ENCODE measurements at regions of chr6 and their contacts with region 1.

Region 1: GRCh38 chr6:33248925-33249731 is 22.5 kb downstream of the VPS52 start:
- DNase-seq: peak; percentile 86 to 99 (median 98)
- H3K4me3 ChIP-seq: peak overlapping the region; percentile 46 to 100 (median 72)
- H3K27ac ChIP-seq: peak overlapping the region; percentile 67 to 96 (median 90)
- H3K27me3 ChIP-seq: no peaks in the 10 kb centered on the region
- CTCF ChIP-seq: peak in 53 of 56 donors; percentile 34 to 76 (median 53)

Region 2: DNA sequence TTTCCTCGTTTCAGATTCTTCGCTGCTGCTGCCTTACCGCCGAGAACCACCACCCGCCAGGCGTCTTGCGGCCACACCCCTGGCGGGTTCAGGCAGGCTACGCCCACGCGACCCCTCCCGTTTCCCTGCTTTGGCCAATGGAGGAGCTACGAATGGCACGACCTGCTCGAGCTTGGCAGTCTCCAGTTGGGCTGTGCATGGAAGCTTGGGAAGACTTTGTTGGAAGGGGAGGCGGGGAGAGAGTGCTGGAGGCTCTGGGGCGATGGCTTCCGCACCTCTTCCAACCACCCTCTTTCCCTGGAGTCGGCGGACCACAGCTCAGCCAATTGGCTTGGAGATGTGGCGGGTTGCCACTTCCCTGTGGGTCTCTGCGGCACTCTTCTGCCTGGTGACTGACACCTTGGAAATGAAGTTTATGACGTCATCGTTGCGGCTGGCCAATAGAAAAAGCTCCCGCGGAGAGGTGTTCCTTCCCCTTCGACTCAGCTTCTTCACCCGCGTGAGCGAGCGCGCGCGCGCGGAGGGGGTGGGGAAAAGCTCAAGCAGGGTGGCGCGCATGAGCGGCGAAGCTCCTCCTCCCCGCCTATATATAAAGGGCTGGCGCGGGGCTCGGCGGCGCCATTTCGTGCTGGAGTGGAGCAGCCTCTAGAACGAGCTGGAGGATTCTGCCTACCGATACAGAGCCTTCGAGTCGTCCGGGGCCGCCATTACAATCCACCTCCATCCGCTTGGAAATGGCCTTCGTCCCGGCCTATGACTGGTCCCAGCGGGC is 277.4 kb before region 1 on chr6:
- intact Hi-C with region 1: loop called in 1 of 2 experiments (anchors 2 kb)
- DNase-seq: peak; percentile 98 to 100 (median 99)
- H3K4me3 ChIP-seq: peak overlapping the region; percentile 61 to 100 (median 95)
- H3K27ac ChIP-seq: peak overlapping the region; percentile 99 to 100 (median 100)
- H3K27me3 ChIP-seq: no peaks in the 10 kb centered on the region
- CTCF ChIP-seq: peak in 19 of 56 donors; percentile 3 to 41 (median 9)

Region 3: DNA sequence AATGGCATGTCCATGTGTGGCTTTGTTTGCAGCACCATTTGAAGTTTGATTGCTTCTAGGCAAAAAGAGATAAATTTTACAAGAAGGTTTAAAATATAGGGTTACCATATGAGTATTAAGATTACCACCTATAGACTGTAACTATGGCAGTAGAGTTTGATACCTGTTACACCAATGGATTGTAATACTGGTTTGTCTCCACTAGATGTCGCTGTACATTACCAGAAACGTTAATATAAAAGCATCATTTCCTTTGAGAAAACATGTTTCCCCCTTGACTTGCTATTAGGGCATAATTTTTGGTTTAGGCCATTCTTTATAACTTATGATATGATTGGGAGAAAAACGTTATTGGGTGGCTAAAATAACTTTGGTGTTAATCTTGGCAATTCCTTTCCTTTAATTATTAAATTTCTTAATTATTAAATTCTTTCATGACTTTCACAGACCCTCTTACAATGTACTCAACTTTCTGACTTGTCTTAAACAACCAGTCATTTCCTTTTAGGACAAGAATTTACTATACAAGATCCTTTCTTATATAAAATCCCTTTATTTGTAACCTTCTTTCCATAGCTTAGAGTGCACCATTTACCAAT is 130.5 kb before region 1 on chr6:
- intact Hi-C with region 1: loop called (anchors 2 kb)
- DNase-seq: no peak
- H3K4me3 ChIP-seq: peak overlapping the region in 6 of 59 donors; percentile 47 to 59 (median 54)
- H3K27ac ChIP-seq: no peak overlapping the region
- H3K27me3 ChIP-seq: peaks cover 0 to 42% (median 25%) of the 10 kb centered on the region in 45 donors
- CTCF ChIP-seq: peak; percentile 73 to 97 (median 91)

Region 4: DNA sequence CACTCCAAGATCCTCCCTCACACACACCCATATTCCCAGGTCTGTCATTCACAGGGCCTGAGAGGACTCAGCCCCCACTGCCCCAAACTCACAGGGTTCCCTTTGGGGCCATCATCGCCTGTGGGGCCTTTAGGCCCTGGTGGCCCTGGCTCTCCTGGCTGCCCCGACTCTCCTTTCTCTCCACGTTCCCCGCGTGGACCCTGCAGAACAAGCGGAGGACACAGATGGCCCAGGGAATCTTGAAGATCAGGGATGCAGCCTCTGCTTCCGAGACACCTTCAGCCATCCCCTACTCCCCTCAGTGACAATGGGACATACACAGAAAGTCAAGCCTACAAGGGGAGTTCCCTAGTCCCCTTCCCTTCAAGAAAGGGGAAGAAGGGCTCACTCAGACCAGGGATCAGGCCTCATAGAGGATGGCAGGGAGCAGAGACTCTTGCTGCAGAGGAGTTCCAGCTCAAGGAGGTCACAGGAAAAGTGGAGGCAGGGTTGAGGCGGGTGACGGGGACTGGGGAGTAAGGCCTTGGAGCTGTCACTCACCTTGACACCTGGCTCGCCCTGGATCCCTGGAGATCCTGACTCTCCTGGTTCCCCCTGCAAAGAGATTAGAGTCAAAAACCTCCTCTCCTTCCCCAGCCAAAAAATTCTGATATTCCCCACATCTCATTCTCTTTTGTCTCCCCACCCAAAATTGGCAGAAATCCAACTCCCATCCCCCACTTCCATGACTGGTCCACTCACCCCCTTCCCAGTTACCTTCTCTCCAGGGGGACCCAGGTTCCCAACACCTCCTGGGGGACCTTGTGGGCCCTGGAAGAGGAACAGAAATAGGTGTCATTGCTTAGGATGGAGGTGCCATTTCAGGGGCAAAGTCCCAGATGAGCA is 79.6 kb before region 1 on chr6:
- intact Hi-C with region 1: loop called in 1 of 2 experiments (anchors 5 kb)
- DNase-seq: no peak
- H3K4me3 ChIP-seq: no peak overlapping the region
- H3K27ac ChIP-seq: no peak overlapping the region
- H3K27me3 ChIP-seq: no peaks in the 10 kb centered on the region
- CTCF ChIP-seq: no peak

Region 5: DNA sequence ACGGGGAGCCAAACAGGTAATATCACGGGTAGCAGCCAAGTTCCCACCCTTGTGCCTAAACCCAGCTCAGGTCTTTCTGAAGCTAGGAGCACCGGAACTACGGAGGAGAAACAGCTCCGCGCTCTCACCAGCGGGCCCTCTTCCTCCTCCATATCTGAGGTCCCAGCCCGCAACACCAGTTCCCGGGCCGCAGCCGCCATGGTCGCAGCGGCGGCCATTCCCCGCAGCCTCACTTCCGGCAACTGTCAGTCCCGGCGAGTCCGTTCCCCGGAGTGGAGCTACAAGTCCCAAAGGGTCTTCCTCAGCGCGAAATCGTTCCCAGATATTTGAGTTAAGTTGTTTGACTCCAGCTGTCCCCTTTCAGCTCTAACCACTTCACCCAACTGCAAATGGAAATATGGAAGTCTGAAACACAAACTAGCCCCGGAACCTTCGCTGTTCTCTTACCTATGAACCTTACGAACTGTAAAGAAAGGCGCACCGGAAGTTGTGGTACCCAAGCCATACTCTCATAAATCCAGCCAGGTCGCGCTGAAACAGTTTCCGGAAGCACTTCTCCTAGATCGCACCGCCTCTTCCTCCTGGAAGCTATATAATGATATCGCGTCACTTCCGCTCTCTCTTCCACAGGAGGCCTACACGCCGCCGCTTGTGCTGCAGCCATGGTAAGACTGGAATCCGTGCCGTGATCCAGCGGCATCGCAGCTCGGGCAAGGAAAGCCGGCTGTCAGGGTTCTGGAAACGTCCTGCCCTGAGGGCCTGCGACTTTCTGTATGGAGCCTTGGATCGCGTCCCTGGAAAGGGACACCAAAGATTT is 22.5 kb after region 1 on chr6 and contains the starts of genes RPS18 and VPS52:
- intact Hi-C with region 1: loop called in 1 of 2 experiments (anchors 2 kb)
- DNase-seq: peak; percentile 81 to 98 (median 95)
- H3K4me3 ChIP-seq: peak within 1 kb of the TSS; percentile 66 to 100 (median 89)
- H3K27ac ChIP-seq: peak within 1 kb of the TSS; percentile 40 to 98 (median 93)
- H3K27me3 ChIP-seq: no peaks in the 10 kb centered on the region
- CTCF ChIP-seq: peak in 20 of 56 donors; percentile 2 to 55 (median 28)
- total RNA-seq, gene RPS18: 295 to 726 (median 479) TPM
- total RNA-seq, gene VPS52: 48.4 to 108 (median 68.9) TPM